ENCODE measurements at regions of chr17 and their contacts with region 1.

Region 1: DNA sequence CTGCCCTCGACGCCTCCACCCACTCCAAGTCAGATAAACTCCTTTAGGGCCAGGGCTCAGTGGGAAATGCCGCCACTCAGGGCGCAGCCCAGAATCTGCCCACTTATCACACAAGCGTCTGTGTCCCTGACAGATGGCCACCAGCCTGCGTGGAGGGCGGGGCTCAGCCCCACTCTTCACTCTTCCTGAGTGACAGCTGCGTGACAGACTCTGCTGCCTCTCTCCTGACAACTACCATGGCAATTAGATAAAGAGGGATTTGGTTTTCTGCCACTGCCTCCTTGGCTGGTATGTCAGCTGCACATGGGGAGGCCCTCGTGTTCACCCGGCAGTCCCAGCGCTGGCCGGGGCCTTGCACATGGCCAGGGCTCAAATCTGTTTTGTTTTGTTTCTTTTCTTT is 96.2 kb downstream of the RTN4RL1 start:
- DNase-seq: peak in 2 of 42 donors; percentile 7 to 21

Region 2: GRCh38 chr17:1861391-1862010 is 67.5 kb before region 1 on chr17:
- intact Hi-C with region 1: no loop called
- DNase-seq: no peak

Region 3: GRCh38 chr17:1989135-1989534 is 60.2 kb after region 1 on chr17:
- intact Hi-C with region 1: loop called (anchors 10 kb)
- DNase-seq: no peak